Breast epithelium (tissue), 4 donors: ENCODE measurements at regions of chr16 and their contacts with region 1.

Region 1: DNA sequence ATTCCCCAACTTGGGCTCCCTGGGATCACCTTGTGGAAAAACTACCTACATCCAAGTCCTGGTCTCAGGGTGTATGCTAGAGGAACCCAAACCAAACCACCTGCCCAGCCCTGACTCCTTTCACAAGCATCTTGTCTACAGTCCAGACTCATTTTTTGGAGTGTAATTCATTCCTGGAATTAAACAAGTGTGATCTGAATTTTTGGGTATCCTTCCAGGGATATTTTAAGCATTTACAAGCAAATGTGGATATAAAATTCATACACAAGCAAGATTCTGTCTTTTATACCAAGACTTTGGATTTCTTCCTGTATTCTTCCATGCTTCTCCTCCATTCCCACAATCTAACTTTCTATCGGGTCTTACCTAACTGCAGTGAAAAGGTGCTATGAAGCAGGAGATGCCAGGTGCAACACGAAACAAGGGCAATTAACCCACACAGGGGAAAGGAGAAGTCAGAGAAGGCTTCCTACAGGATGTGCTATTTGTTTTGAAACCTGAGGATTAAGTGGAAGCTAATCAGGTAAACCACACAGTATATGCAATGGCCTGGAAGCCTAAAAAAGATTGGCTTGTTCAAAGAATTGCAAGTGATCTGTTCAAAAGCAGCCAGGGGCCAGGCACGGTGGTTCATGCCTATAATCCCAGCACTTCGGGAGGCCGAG is 417.2 kb upstream of the C16orf82 start:
- DNase-seq: no peak
- H3K4me3 ChIP-seq: no peak overlapping the region
- H3K27ac ChIP-seq: no peak overlapping the region
- H3K4me1 ChIP-seq: no peaks in the 10 kb centered on the region
- H3K27me3 ChIP-seq: no peaks in the 10 kb centered on the region
- CTCF ChIP-seq: no peak
- POLR2A ChIP-seq: no peak

Region 2: GRCh38 chr16:25735645-25736044 is 913.9 kb before region 1 on chr16:
- intact Hi-C with region 1: no loop called
- DNase-seq: no peak
- H3K4me3 ChIP-seq: no peak overlapping the region
- H3K27ac ChIP-seq: no peak overlapping the region
- H3K4me1 ChIP-seq: no peaks in the 10 kb centered on the region
- H3K27me3 ChIP-seq: no peaks in the 10 kb centered on the region
- CTCF ChIP-seq: no peak
- POLR2A ChIP-seq: no peak

Region 3: GRCh38 chr16:26665162-26665939 is 15.8 kb after region 1 on chr16:
- intact Hi-C with region 1: no loop called
- DNase-seq: no peak
- H3K4me3 ChIP-seq: no peak overlapping the region
- H3K27ac ChIP-seq: no peak overlapping the region
- H3K4me1 ChIP-seq: no peaks in the 10 kb centered on the region
- H3K27me3 ChIP-seq: no peaks in the 10 kb centered on the region
- CTCF ChIP-seq: no peak
- POLR2A ChIP-seq: no peak

Region 4: GRCh38 chr16:26791169-26791568 is 141.7 kb after region 1 on chr16:
- intact Hi-C with region 1: loop called (anchors 5 kb)
- DNase-seq: no peak
- H3K4me3 ChIP-seq: no peak overlapping the region
- H3K27ac ChIP-seq: no peak overlapping the region
- H3K4me1 ChIP-seq: no peaks in the 10 kb centered on the region
- H3K27me3 ChIP-seq: no peaks in the 10 kb centered on the region
- CTCF ChIP-seq: no peak
- POLR2A ChIP-seq: no peak

Region 5: GRCh38 chr16:28098959-28099945 is 1449.7 kb after region 1 on chr16:
- intact Hi-C with region 1: no loop called
- DNase-seq: no peak
- H3K4me3 ChIP-seq: no peak overlapping the region
- H3K27ac ChIP-seq: no peak overlapping the region
- H3K4me1 ChIP-seq: no peaks in the 10 kb centered on the region
- H3K27me3 ChIP-seq: no peaks in the 10 kb centered on the region
- CTCF ChIP-seq: no peak
- POLR2A ChIP-seq: no peak